Ascending aorta (tissue), 2 donors: ENCODE measurements at regions of chr4 and their contacts with region 1.

Region 1: GRCh38 chr4:149999485-150000074 is 78.7 kb upstream of the DCLK2 start:
- DNase-seq: no peak
- H3K4me3 ChIP-seq: no peak overlapping the region
- H3K27ac ChIP-seq: no peak overlapping the region
- H3K4me1 ChIP-seq: peaks cover 0 to 13% of the 10 kb centered on the region in 2 donors
- H3K27me3 ChIP-seq: no peaks in the 10 kb centered on the region
- CTCF ChIP-seq: peak; percentile 58 to 85 (median 73)

Region 2: GRCh38 chr4:149961876-149962597 is 37.5 kb before region 1 on chr4:
- intact Hi-C with region 1: no loop called
- DNase-seq: no peak
- H3K4me3 ChIP-seq: no peak overlapping the region
- H3K27ac ChIP-seq: no peak overlapping the region
- H3K4me1 ChIP-seq: no peaks in the 10 kb centered on the region
- H3K27me3 ChIP-seq: no peaks in the 10 kb centered on the region
- CTCF ChIP-seq: no peak

Region 3: DNA sequence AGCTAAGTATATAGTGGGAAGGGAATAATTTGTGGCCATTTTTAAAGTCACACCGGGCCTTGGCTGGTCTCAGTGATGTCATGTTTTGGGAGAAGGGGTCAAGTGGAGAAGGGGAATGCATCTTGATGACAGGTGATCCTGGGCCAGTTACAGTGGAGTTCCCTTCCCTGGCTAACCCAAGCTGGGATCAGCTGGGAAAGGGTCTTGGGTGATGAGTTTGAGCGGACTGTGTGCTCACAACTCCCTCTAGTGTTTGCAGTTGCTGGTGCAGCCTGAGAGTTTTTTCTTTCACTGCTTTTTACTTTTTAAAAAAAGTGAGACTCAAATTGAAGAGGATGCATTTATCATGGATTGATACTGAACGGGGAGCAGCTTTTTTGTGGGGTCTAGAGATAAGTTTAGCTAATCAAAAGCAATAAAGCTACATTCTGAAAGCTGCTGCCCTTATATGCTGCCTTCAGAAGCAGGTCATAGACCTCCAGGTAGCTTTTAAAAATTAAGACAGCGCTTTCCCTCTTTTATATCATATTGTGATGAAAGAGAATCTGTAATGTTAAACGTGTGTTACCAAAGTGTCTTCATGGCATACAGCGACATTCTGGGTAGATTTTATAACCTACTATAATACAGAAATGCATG is 243.4 kb after region 1 on chr4:
- intact Hi-C with region 1: loop called (anchors 2 kb)
- DNase-seq: no peak
- H3K4me3 ChIP-seq: no peak overlapping the region
- H3K27ac ChIP-seq: no peak overlapping the region
- H3K4me1 ChIP-seq: peaks cover 0 to 15% of the 10 kb centered on the region in 2 donors
- H3K27me3 ChIP-seq: no peaks in the 10 kb centered on the region
- CTCF ChIP-seq: peak; percentile 44 to 92 (median 85)

Region 4: DNA sequence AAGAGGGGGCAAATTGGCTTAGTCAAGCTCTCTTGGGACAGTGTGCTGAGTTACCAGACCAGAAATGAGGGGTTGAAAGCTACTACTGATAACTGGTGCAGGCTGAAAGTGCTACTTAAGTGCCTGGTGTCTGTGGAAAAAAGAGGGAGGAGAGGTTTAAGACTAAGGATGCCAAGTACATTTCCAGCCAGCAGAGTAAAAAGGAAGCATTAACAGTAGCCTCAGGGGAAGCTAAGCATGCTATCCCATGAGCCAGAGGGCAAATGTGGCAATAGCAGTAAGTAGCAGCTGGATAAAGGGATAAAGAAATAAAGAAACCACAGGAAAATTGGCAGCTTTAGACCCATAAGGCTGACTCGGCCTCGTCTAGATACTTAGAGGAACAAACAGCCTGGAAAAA is 386.0 kb after region 1 on chr4:
- intact Hi-C with region 1: no loop called
- DNase-seq: no peak
- H3K4me3 ChIP-seq: no peak overlapping the region
- H3K27ac ChIP-seq: no peak overlapping the region
- H3K4me1 ChIP-seq: no peaks in the 10 kb centered on the region
- H3K27me3 ChIP-seq: no peaks in the 10 kb centered on the region
- CTCF ChIP-seq: no peak